ENCODE measurements at regions of chr10 and their contacts with region 1.

Region 1: DNA sequence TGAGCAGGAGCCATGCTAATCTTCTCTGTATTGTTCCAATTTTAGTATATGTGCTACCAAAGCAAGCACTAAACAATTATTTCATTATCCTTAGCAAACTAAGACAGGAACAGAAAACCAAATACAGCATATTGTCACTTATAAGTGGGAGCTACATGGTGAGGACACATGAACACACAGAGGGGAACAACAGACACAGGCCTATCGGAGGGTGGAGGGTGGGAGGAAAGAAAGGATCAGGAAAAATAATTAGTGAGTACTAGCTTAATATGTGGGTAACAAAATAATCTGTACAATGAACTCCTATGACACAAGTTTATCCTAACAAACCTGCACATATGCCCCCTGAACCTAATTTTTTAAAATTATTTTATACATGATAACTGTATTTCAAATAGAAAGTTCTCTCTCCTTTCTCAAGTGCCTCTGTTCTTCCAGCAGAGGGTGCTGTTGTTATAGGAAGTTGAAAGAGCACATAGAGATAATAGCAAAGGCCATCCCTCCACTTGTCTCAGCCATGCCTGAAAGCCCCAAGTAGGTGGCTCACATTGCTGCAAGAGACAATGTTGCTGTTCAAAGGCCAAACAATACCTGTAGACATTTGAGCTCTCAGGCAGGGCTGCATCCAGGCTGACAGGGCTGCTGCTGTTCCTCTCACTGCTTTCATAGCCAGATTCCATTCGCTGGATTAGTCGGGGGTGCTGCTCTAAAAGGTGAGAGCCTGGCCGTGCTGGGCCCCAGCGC is 33.4 kb upstream of the PPP3CB start:
- DNase-seq: peak; percentile 79

Region 2: DNA sequence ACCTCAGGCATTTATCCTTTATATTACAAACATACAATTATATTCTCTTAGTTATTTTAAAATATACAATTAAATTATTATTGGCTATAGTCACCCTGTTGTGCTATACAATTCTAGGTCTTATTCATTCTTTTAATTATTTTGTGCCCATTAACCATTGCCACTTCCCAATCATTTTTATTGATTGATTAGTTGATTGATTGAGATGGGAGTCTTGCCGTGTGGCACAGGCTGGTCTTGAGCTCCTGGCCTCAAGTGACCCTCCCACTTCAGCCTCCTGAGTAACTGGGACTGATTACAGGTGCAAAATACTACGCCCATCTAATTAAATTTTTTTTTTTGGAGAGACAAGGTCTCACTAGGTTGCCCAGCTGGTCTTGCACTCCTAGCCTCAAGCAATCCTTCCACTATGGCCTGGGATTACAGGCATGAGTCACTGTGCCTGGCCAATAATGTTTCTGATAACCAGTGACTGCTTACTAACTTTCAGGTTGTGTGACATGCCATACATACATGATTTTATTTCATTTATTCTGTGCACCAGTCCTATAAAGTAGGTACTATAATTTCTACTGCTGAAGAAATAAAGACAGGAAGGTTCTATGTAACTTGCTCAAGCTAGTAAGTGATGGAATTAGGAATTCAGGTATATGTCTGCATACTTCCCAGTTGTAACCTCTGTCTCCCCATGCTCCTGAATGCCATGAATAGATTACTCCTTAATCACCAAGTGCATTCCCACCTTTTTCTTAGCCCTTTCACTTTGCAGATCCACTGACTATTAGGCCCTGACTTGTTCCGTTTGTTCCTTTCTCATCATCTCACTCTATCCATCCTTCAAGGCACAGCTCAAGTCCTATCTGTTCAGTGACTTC is 809.3 kb before region 1 on chr10:
- in situ Hi-C with region 1: no loop called
- DNase-seq: no peak

Region 3: DNA sequence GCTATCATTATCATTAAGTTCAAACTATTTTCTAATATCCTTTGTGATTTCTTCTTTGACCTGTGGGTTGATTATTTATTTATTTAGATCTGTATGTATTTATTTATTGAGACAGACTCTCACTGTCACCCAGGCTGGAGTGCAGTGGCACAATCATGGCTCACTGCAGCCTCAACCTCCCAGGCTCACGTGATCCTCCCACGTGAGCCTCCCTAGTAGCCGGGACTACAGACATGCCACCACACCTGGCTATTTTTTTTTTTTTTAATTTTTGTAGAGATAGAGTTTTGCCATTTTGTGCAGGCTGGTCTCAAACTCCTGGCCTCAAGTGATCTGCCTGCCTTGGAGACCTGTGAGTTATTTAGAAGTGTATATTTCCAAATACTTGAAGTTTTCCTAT is 248.2 kb before region 1 on chr10:
- in situ Hi-C with region 1: no loop called
- DNase-seq: no peak

Region 4: GRCh38 chr10:73625884-73626752 is 96.9 kb after region 1 on chr10:
- in situ Hi-C with region 1: loop called (anchors 25 kb)
- DNase-seq: peak; percentile 92

Region 5: GRCh38 chr10:73717556-73717955 is 188.3 kb after region 1 on chr10:
- in situ Hi-C with region 1: no loop called
- DNase-seq: peak; percentile 63